ENCODE measurements at regions of chr11 and their contacts with region 1.

Region 1: DNA sequence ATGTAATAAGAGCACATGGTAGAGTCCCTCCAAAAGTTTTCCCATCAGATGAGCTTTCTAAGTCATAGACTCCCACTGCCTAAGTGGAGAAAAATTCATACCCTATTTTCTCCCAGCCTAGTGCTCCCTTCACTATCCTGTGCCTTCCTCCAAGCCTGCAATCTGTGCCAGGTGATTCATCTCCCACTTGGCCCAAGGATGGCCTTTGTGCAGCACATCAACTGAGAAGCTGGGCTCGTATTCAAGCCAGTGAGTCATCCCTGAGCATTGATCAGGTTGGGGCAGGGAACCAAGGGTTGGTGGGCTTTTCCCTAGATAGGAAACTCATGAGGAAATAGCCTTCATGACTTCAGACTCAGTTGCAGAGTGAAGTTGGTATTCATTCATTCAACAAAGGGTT is 64.6 kb downstream of the PANX1 start:
- DNase-seq: peak in 3 of 10 donors; percentile 7 to 59 (median 53)
- H3K4me3 ChIP-seq: no peak overlapping the region
- H3K27ac ChIP-seq: peak overlapping the region in 2 of 59 donors; percentile 1 to 11
- H3K27me3 ChIP-seq: no peaks in the 10 kb centered on the region
- CTCF ChIP-seq: no peak

Region 2: GRCh38 chr11:94400839-94401772 is 207.8 kb after region 1 on chr11 and contains the start of gene GPR83:
- intact Hi-C with region 1: loop called in 1 of 2 experiments (anchors 10 kb)
- DNase-seq: peak in 5 of 10 donors; percentile 36 to 73 (median 62)
- H3K4me3 ChIP-seq: peak within 1 kb of the TSS; percentile 0 to 71 (median 53)
- H3K27ac ChIP-seq: peak within 1 kb of the TSS in 7 of 59 donors; percentile 5 to 80 (median 30)
- H3K27me3 ChIP-seq: peaks cover 0 to 42% (median 20%) of the 10 kb centered on the region in 45 donors
- CTCF ChIP-seq: no peak
- total RNA-seq, gene GPR83: 0.81 to 28.0 (median 7.6) TPM